HEK293T (cell line): ENCODE measurements at regions of chr1 and their contacts with region 1.

Region 1: GRCh38 chr1:27044613-27045151 is 32.0 kb upstream of the TENT5B start:
- DNase-seq: peak; percentile 85

Region 2: GRCh38 chr1:26496861-26497260 is 547.8 kb before region 1 on chr1:
- CTCF ChIA-PET with region 1: no interaction called
- POLR2A ChIA-PET with region 1: no interaction called
- DNase-seq: no peak

Region 3: GRCh38 chr1:27006683-27007082 is 38.0 kb before region 1 on chr1:
- CTCF ChIA-PET with region 1: no interaction called
- POLR2A ChIA-PET with region 1: no interaction called
- DNase-seq: no peak

Region 4: GRCh38 chr1:27031235-27032118 is 13.2 kb before region 1 on chr1:
- CTCF ChIA-PET with region 1: interaction called, 40 read pairs
- POLR2A ChIA-PET with region 1: no interaction called
- DNase-seq: no peak

Region 5: DNA sequence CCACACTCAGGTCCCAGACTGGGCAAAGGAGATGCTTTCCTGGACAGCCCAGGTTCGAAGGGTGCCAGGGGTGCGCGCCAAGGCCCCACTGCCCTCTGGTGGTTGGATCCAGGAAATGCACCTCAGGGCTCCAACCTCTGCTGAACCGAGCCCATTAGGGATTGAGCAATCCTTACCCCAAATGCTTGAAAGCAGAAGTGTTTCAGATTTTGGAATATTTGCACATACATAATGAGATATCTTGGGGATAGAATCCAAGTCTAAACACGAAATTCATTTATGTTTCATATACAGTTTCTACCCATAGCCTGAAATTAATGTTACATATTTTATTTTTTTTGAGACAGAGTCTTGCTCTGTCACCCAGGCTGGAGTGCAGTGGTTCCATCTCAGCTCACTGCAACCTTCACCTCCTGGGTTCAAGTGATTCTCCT is 52.8 kb after region 1 on chr1:
- CTCF ChIA-PET with region 1: interaction called, 94 read pairs
- POLR2A ChIA-PET with region 1: interaction called, 3 read pairs
- DNase-seq: peak; percentile 85